ENCODE measurements at regions of chr5 and their contacts with region 1.

Region 1: GRCh38 chr5:136249678-136250266 is 56.8 kb upstream of the SMIM32 start:
- DNase-seq: peak; percentile 36 to 70
- ATAC-seq: peak; percentile 82 to 97
- H3K4me3 ChIP-seq: no peak overlapping the region
- H3K27ac ChIP-seq: no peak overlapping the region
- H3K4me1 ChIP-seq: no peaks in the 10 kb centered on the region
- CTCF ChIP-seq: peak; percentile 91
- EP300 ChIP-seq: no peak
- POLR2A ChIP-seq: no peak
- RAD21 ChIP-seq: peak; percentile 90 to 96

Region 2: DNA sequence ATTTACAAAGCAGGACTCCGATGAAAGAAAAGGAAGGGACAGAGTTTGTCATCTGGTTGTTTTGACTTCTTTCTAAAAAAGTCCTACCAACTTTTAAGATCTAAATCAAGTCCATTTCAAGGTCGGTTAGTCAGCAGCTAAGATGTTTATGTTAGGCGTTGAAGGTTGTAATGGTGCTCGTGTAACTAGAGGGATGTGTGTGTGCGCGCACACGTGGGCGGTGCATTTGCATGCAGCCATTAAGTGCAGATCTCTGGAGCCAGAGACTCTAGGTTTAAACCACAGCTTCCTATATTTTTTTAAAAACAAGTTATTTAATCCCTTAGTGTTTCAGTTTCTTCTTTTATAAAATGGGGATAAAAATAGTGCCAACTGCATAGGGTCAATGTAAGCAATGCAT is 20.2 kb after region 1 on chr5:
- CTCF ChIA-PET with region 1: interaction called, 14 read pairs
- POLR2A ChIA-PET with region 1: no interaction called
- DNase-seq: no peak
- ATAC-seq: no peak
- H3K4me3 ChIP-seq: no peak overlapping the region
- H3K27ac ChIP-seq: no peak overlapping the region
- H3K4me1 ChIP-seq: no peaks in the 10 kb centered on the region
- CTCF ChIP-seq: no peak
- EP300 ChIP-seq: no peak
- POLR2A ChIP-seq: no peak
- RAD21 ChIP-seq: no peak

Region 3: GRCh38 chr5:136423944-136424606 is 174.3 kb after region 1 on chr5:
- CTCF ChIA-PET with region 1: interaction called, 10 read pairs
- POLR2A ChIA-PET with region 1: no interaction called
- DNase-seq: no peak
- ATAC-seq: no peak
- H3K4me3 ChIP-seq: no peak overlapping the region
- H3K27ac ChIP-seq: no peak overlapping the region
- H3K4me1 ChIP-seq: no peaks in the 10 kb centered on the region
- CTCF ChIP-seq: no peak
- EP300 ChIP-seq: no peak
- POLR2A ChIP-seq: no peak
- RAD21 ChIP-seq: no peak

Region 4: DNA sequence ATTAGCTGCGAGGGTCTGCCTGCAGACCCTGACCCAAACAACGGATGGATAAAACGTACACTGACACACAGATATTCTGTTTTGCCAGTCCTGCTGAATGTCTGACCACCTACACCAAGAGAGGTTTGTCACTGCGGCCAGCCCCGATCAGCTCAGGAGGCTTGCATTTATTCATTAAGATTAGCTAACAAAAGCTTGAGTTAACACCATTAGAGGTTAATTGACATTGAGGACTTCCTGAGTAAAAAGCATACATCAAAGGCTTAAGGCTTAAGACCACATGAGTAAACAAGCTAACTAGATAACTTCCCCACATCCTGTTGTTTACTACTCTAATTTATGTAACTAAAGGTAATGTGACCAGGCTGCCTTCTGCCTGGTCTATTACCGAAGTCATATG is 313.7 kb after region 1 on chr5:
- CTCF ChIA-PET with region 1: no interaction called
- POLR2A ChIA-PET with region 1: no interaction called
- DNase-seq: no peak
- ATAC-seq: no peak
- H3K4me3 ChIP-seq: no peak overlapping the region
- H3K27ac ChIP-seq: no peak overlapping the region
- H3K4me1 ChIP-seq: no peaks in the 10 kb centered on the region
- CTCF ChIP-seq: no peak
- EP300 ChIP-seq: no peak
- POLR2A ChIP-seq: no peak
- RAD21 ChIP-seq: no peak

Region 5: GRCh38 chr5:136763548-136763947 is 513.8 kb after region 1 on chr5:
- CTCF ChIA-PET with region 1: interaction called, 135 read pairs
- POLR2A ChIA-PET with region 1: no interaction called
- DNase-seq: no peak
- ATAC-seq: no peak
- H3K4me3 ChIP-seq: no peak overlapping the region
- H3K27ac ChIP-seq: no peak overlapping the region
- H3K4me1 ChIP-seq: no peaks in the 10 kb centered on the region
- CTCF ChIP-seq: no peak
- EP300 ChIP-seq: no peak
- POLR2A ChIP-seq: no peak
- RAD21 ChIP-seq: no peak